ENCODE measurements at regions of chr12 and their contacts with region 1.

Region 1: DNA sequence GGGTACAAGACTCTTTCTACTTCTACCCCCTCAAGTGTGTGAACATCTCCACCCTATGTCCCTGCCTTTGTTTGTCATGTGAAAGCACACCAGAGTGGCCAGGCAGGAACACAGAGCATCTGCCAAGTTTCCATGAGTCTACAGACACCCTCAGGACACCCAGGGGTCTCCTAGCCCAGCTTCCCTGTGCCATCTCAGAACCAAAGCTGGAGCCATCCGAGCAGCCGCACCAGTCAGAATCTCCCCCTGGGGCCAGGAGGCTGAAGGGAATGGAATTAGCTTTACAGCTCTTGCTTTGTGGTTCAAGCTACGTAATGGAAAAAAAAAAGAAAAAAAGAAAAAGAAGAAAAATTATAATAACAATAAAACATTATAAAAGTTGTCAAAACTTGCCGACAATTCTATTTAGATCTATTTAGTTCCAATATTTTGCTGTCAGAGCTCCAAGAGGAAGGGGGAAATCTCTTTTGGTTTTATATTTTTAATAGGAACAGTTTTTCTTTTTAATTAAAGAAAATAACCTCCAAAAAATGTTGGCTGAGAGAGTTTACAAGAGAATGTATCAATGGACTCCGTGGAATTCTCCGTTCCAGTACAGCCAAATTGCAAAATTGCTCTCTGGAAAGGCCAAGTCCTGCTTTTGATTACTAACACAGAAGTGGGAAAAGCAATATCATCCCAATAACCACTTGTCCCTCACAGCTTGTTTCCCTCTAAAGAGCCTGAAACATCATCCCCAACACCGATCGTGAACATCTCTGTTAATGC is 37.1 kb downstream of the TBX5 start:
- DNase-seq: no peak
- H3K4me3 ChIP-seq: no peak overlapping the region
- H3K27ac ChIP-seq: no peak overlapping the region
- H3K4me1 ChIP-seq: 0 out of 7 replicates have a peak, but pooled peaks cover 0 to 2% (median under 1%) of the 10 kb centered on the region in 4 experiments
- H3K27me3 ChIP-seq: no peaks in the 10 kb centered on the region
- CTCF ChIP-seq: no peak
- EP300 ChIP-seq: no peak
- POLR2A ChIP-seq: no peak
- RAD21 ChIP-seq: no peak

Region 2: DNA sequence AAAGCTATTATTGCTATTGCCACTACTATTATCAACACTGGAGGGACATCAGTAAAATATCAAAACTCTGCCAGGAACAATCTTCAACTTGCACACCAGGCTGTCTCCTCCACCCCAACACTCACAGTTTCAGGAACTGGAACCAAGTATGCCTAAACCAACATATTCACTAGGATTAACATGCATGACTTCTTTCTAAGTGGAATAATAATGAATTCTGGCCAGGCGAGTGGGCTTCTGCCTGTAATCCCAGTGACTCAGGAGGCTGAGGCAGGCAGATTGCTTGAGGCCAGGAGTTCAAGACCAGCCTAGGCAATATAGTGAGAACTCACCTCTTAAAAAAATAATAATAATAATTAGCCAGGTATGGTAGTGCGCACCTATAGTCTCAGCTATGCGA is 21.0 kb before region 1 on chr12:
- CTCF ChIA-PET with region 1: interaction called, 11 read pairs
- POLR2A ChIA-PET with region 1: no interaction called
- DNase-seq: no peak
- H3K4me3 ChIP-seq: no peak overlapping the region
- H3K27ac ChIP-seq: no peak overlapping the region
- H3K4me1 ChIP-seq: no peaks in the 10 kb centered on the region
- H3K27me3 ChIP-seq: no peaks in the 10 kb centered on the region
- CTCF ChIP-seq: no peak
- EP300 ChIP-seq: no peak
- POLR2A ChIP-seq: no peak
- RAD21 ChIP-seq: no peak